Calu3 (cell line): ENCODE measurements at regions of chr12 and their contacts with region 1.

Region 1: DNA sequence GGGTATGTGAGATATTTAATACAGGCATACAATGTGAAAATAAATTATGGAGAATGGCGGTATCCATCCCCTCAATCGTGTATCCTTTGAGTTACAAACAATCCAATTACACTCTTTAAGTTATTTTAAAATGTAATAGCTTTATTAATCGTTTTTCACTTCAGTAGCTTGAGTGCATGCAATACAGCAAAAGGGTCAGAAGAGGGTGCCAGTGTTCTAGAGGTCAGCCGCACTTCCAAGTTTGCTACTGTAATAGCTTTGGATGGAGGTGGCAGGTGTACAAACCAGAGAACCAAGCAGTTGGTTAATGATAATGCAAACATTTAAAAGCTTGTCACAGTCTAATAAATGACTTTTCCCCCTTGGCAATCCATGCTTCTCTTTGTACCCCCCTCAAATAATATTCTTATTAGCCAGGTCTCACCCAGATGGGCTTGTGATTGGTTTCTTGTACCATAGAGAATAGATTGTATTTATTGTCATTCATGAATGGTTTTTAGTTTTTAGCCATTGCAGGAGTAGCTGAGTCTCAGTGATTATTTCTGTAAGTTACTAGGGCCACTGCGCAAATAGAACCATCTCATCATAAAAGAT is 127.0 kb downstream of the ERC1 start:
- DNase-seq: peak; percentile 67
- H3K4me3 Mint-ChIP-seq: no peak overlapping the region
- H3K27ac Mint-ChIP-seq: no peak overlapping the region
- H3K4me1 Mint-ChIP-seq: peaks cover 9% of the 10 kb centered on the region
- H3K27me3 Mint-ChIP-seq: no peaks in the 10 kb centered on the region
- CTCF ChIP-seq: peak; percentile 87

Region 2: DNA sequence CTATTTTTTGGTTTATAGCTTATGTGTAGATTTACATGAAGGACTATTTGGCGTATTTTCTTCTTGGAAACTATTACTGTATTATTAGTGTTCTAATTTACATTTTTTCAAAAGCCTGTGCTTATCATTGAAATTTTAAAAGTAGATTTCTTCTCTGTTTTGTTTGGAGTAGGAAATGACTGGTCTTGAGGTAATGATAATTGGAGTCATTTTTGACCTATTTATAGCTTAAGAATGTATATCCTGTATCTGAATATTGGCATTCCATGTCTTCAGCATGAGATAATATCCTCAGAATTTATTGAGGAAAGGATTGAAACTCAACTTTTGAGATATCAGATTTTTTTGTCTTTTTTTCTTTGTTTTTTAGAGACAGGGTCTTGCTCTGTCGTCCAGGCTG is 66.3 kb after region 1 on chr12:
- CTCF ChIA-PET with region 1: no interaction called
- intact Hi-C with region 1: no loop called
- DNase-seq: no peak
- H3K4me3 Mint-ChIP-seq: no peak overlapping the region
- H3K27ac Mint-ChIP-seq: no peak overlapping the region
- H3K4me1 Mint-ChIP-seq: no peaks in the 10 kb centered on the region
- H3K27me3 Mint-ChIP-seq: no peaks in the 10 kb centered on the region
- CTCF ChIP-seq: no peak

Region 3: GRCh38 chr12:1217191-1217949 is 99.3 kb after region 1 on chr12:
- CTCF ChIA-PET with region 1: interaction called, 9 read pairs
- intact Hi-C with region 1: loop called (anchors 5 kb)
- DNase-seq: peak; percentile 13
- H3K4me3 Mint-ChIP-seq: no peak overlapping the region
- H3K27ac Mint-ChIP-seq: no peak overlapping the region
- H3K4me1 Mint-ChIP-seq: peaks cover 1% of the 10 kb centered on the region
- H3K27me3 Mint-ChIP-seq: no peaks in the 10 kb centered on the region
- CTCF ChIP-seq: no peak

Region 4: GRCh38 chr12:1346126-1346525 is 228.1 kb after region 1 on chr12:
- CTCF ChIA-PET with region 1: interaction called, 3 read pairs
- intact Hi-C with region 1: loop called (anchors 10 kb)
- DNase-seq: no peak
- H3K4me3 Mint-ChIP-seq: no peak overlapping the region
- H3K27ac Mint-ChIP-seq: peak overlapping the region; percentile 47
- H3K4me1 Mint-ChIP-seq: peaks cover 25% of the 10 kb centered on the region
- H3K27me3 Mint-ChIP-seq: no peaks in the 10 kb centered on the region
- CTCF ChIP-seq: no peak

Region 5: DNA sequence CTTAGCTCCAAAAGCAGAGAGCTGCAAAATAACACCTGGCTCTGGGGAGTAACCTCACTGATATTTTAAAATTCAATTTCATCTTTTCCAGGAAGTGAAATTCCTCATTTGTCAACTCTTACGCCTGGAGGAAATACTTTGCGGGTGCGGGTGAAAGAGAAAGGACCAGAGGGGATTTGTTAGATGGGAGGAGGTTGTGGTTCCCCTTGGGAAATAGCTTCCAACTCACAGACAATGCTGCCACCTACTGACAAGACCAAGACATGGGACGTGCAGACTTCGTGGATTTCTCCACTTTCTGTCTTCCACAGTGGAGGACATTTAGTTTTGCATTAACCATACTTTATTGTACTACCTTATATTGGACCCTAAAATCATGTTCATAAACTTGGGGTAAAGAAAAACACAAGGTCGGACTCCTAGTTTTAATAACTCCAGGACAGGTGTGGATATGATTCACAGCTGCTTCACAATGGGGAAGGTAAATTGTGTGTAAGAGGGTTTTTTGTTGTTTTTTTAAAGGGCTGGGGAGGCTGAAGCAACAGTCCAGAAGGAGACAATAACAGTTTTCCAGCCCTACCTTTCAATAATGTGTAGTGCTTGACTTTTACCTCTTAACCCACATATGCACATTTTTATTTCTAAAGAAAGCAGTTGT is 465.5 kb after region 1 on chr12:
- CTCF ChIA-PET with region 1: interaction called, 55 read pairs
- intact Hi-C with region 1: loop called (anchors 1 kb)
- DNase-seq: peak; percentile 73
- H3K4me3 Mint-ChIP-seq: no peak overlapping the region
- H3K27ac Mint-ChIP-seq: no peak overlapping the region
- H3K4me1 Mint-ChIP-seq: peaks cover 3% of the 10 kb centered on the region
- H3K27me3 Mint-ChIP-seq: no peaks in the 10 kb centered on the region
- CTCF ChIP-seq: peak; percentile 75